ENCODE measurements at regions of chr6 and their contacts with region 1.

Region 1: DNA sequence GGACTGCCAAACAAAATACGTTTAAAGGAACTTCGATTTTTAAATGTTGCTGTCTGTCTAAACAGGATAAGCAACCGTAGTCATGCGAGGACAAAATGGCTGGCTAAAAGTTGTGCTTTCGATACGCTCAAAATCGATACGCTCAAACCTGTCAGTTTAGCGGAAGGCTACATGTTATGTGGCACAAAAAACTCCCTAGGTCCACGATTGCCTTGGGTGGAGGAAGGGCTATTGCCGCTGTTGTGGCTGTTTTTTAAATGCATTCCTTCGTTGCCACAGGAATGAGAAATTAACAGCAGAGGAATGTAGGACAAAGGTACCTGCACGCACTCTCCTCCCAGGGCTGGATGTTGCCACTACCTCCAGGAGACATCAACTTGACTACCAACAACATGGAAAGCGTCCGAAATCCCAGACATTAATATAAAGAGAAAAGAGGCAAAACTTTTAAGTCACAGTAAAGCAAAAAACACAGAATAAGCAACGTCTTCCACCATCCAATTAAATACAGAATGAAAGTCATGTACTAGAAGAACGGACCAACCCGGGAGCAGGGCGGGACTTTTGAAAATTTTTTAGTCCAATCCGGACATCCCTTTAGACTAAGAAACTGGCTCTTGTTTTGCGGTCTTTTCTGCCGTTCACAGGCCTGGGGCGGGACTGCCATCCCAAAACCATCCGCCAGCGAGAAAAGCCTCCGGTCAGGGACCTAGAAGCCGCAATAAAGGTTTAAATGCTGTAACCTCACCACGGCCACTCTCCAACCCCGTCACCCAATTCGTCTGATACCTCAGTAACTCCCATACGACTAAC is 32.2 kb upstream of the HFE start:
- DNase-seq: peak; percentile 68 to 97 (median 80)
- ATAC-seq: peak; percentile 71
- H3K4me3 ChIP-seq: peak overlapping the region; percentile 89
- H3K4me3 Mint-ChIP-seq: peak overlapping the region; percentile 97
- H3K27ac ChIP-seq: peak overlapping the region; percentile 81
- H3K27ac Mint-ChIP-seq: peak overlapping the region; percentile 96
- H3K4me1 ChIP-seq: peaks cover 29% of the 10 kb centered on the region
- H3K4me1 Mint-ChIP-seq: peaks cover 28% of the 10 kb centered on the region
- H3K27me3 ChIP-seq: no peaks in the 10 kb centered on the region
- H3K27me3 Mint-ChIP-seq: no peaks in the 10 kb centered on the region
- CTCF ChIP-seq: no peak

Region 2: DNA sequence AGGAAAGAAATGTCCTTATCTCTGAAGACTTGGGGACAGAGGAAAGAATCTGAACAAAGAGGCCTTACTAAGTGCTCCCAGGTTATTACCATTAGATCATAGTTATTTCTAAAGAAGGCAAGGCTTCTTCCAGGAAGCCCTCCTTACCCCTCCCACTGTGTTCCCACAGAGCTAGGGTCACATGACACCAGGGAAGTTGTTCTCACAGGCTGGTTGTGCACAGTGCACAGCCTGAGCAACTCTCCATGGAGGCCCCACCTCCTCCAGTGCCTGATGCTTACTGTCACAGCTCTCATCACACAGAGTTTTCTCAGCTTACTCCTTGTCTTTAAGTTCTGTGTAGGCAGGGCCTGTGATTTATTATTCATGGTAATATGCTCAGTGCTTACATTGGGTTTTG is 472.0 kb before region 1 on chr6:
- CTCF ChIA-PET with region 1: no interaction called
- POLR2A ChIA-PET with region 1: no interaction called
- intact Hi-C with region 1: no loop called
- DNase-seq: no peak
- ATAC-seq: no peak
- H3K4me3 ChIP-seq: no peak overlapping the region
- H3K4me3 Mint-ChIP-seq: no peak overlapping the region
- H3K27ac ChIP-seq: no peak overlapping the region
- H3K27ac Mint-ChIP-seq: no peak overlapping the region
- H3K4me1 ChIP-seq: peaks cover 5% of the 10 kb centered on the region
- H3K4me1 Mint-ChIP-seq: peaks cover 10% of the 10 kb centered on the region
- H3K27me3 ChIP-seq: no peaks in the 10 kb centered on the region
- H3K27me3 Mint-ChIP-seq: no peaks in the 10 kb centered on the region
- CTCF ChIP-seq: no peak

Region 3: GRCh38 chr6:26020329-26021000 is 34.6 kb before region 1 on chr6:
- CTCF ChIA-PET with region 1: interaction called, 11 read pairs
- POLR2A ChIA-PET with region 1: interaction called, 189 read pairs
- intact Hi-C with region 1: loop called in 1 of 2 experiments (anchors 5 kb)
- DNase-seq: peak; percentile 63 to 96 (median 78)
- ATAC-seq: peak; percentile 50
- H3K4me3 ChIP-seq: peak overlapping the region; percentile 73
- H3K4me3 Mint-ChIP-seq: peak overlapping the region; percentile 95
- H3K27ac ChIP-seq: peak overlapping the region; percentile 95 to 96
- H3K27ac Mint-ChIP-seq: peak overlapping the region; percentile 97
- H3K4me1 ChIP-seq: peaks cover 38% of the 10 kb centered on the region
- H3K4me1 Mint-ChIP-seq: peaks cover 41% of the 10 kb centered on the region
- H3K27me3 ChIP-seq: no peaks in the 10 kb centered on the region
- H3K27me3 Mint-ChIP-seq: no peaks in the 10 kb centered on the region
- CTCF ChIP-seq: no peak

Region 4: DNA sequence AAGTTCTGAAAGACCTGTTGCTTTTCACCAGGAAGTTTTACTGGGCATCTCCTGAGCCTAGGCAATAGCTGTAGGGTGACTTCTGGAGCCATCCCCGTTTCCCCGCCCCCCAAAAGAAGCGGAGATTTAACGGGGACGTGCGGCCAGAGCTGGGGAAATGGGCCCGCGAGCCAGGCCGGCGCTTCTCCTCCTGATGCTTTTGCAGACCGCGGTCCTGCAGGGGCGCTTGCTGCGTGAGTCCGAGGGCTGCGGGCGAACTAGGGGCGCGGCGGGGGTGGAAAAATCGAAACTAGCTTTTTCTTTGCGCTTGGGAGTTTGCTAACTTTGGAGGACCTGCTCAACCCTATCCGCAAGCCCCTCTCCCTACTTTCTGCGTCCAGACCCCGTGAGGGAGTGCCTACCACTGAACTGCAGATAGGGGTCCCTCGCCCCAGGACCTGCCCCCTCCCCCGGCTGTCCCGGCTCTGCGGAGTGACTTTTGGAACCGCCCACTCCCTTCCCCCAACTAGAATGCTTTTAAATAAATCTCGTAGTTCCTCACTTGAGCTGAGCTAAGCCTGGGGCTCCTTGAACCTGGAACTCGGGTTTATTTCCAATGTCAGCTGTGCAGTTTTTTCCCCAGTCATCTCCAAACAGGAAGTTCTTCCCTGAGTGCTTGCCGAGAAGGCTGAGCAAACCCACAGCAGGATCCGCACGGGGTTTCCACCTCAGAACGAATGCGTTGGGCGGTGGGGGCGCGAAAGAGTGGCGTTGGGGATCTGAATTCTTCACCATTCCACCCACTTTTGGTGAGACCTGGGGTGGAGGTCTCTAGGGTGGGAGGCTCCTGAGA is 32.4 kb after region 1 on chr6 and contains the start of gene HFE:
- CTCF ChIA-PET with region 1: no interaction called
- POLR2A ChIA-PET with region 1: interaction called, 41 read pairs
- intact Hi-C with region 1: no loop called
- DNase-seq: peak in 11 of 14 experiments; percentile 3 to 57 (median 21)
- ATAC-seq: peak; percentile 25
- H3K4me3 ChIP-seq: peak within 1 kb of the TSS; percentile 86
- H3K4me3 Mint-ChIP-seq: peak within 1 kb of the TSS; percentile 87
- H3K27ac ChIP-seq: peak within 1 kb of the TSS; percentile 23 to 61
- H3K27ac Mint-ChIP-seq: peak within 1 kb of the TSS; percentile 71
- H3K4me1 ChIP-seq: peaks cover 33% of the 10 kb centered on the region
- H3K4me1 Mint-ChIP-seq: peaks cover 34% of the 10 kb centered on the region
- H3K27me3 ChIP-seq: no peaks in the 10 kb centered on the region
- H3K27me3 Mint-ChIP-seq: no peaks in the 10 kb centered on the region
- CTCF ChIP-seq: no peak
- total RNA-seq, gene HFE: 0.08 to 0.28 TPM

Region 5: DNA sequence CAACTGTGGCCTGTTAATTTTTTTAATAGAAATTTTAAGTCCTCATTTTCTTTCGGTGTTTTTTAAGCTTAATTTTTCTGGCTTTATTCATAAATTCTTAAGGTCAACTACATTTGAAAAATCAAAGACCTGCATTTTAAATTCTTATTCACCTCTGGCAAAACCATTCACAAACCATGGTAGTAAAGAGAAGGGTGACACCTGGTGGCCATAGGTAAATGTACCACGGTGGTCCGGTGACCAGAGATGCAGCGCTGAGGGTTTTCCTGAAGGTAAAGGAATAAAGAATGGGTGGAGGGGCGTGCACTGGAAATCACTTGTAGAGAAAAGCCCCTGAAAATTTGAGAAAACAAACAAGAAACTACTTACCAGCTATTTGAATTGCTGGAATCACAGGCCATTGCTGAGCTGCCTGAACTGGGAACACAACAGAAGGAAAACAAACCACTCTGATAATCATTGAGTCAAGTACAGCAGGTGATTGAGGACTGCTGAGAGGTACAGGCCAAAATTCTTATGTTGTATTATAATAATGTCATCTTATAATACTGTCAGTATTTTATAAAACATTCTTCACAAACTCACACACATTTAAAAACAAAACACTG is 42.3 kb after region 1 on chr6:
- CTCF ChIA-PET with region 1: interaction called, 3 read pairs
- POLR2A ChIA-PET with region 1: interaction called, 138 read pairs
- intact Hi-C with region 1: loop called in 1 of 2 experiments (anchors 2 kb)
- DNase-seq: peak; percentile 50 to 87 (median 57)
- ATAC-seq: peak; percentile 86
- H3K4me3 ChIP-seq: no peak overlapping the region
- H3K4me3 Mint-ChIP-seq: no peak overlapping the region
- H3K27ac ChIP-seq: no peak overlapping the region
- H3K27ac Mint-ChIP-seq: no peak overlapping the region
- H3K4me1 ChIP-seq: no peaks in the 10 kb centered on the region
- H3K4me1 Mint-ChIP-seq: peaks cover 5% of the 10 kb centered on the region
- H3K27me3 ChIP-seq: no peaks in the 10 kb centered on the region
- H3K27me3 Mint-ChIP-seq: peaks cover 4% of the 10 kb centered on the region
- CTCF ChIP-seq: peak; percentile 78

Region 6: DNA sequence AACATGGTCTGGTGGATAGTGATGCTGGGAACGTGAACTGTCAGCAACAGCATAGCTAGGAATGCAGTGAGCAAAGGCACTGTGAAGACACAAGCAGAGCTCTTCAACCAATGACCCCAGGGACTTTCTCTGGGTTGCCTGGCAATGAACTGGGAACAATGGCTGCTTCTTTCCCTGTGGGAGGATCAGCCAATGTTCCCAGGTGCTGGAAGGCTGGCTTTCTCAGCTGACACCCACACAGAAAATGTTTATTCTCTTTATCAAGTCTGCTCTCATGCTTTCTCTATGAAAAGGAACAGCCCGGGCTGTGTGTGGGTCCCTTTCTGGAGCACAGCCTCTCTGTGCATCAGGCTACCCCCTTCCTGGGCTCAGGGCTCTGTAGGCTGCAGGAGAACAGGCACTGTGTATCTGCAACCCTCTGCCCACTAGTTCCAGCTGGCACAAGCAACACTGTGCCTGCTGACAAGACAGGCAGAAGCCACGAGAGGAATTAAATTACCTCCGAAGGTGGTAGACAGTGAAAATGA is 86.4 kb after region 1 on chr6:
- CTCF ChIA-PET with region 1: no interaction called
- POLR2A ChIA-PET with region 1: no interaction called
- intact Hi-C with region 1: no loop called
- DNase-seq: no peak
- ATAC-seq: no peak
- H3K4me3 ChIP-seq: no peak overlapping the region
- H3K4me3 Mint-ChIP-seq: no peak overlapping the region
- H3K27ac ChIP-seq: no peak overlapping the region
- H3K27ac Mint-ChIP-seq: no peak overlapping the region
- H3K4me1 ChIP-seq: no peaks in the 10 kb centered on the region
- H3K4me1 Mint-ChIP-seq: peaks cover 5% of the 10 kb centered on the region
- H3K27me3 ChIP-seq: no peaks in the 10 kb centered on the region
- H3K27me3 Mint-ChIP-seq: no peaks in the 10 kb centered on the region
- CTCF ChIP-seq: no peak

Region 7: GRCh38 chr6:26204332-26205165 is 149.5 kb after region 1 on chr6:
- CTCF ChIA-PET with region 1: no interaction called
- POLR2A ChIA-PET with region 1: interaction called, 103 read pairs
- intact Hi-C with region 1: loop called in 1 of 2 experiments (anchors 5 kb)
- DNase-seq: peak; percentile 73 to 98 (median 80)
- ATAC-seq: peak; percentile 69
- H3K4me3 ChIP-seq: peak overlapping the region; percentile 68
- H3K4me3 Mint-ChIP-seq: no peak overlapping the region
- H3K27ac ChIP-seq: peak overlapping the region; percentile 89 to 90
- H3K27ac Mint-ChIP-seq: no peak overlapping the region
- H3K4me1 ChIP-seq: peaks cover 34% of the 10 kb centered on the region
- H3K4me1 Mint-ChIP-seq: peaks cover 8% of the 10 kb centered on the region
- H3K27me3 ChIP-seq: no peaks in the 10 kb centered on the region
- H3K27me3 Mint-ChIP-seq: no peaks in the 10 kb centered on the region
- CTCF ChIP-seq: peak; percentile 32

Region 8: GRCh38 chr6:26249957-26250697 is 195.1 kb after region 1 on chr6:
- CTCF ChIA-PET with region 1: no interaction called
- POLR2A ChIA-PET with region 1: interaction called, 12 read pairs
- intact Hi-C with region 1: no loop called
- DNase-seq: peak; percentile 64 to 93 (median 74)
- ATAC-seq: peak; percentile 78
- H3K4me3 ChIP-seq: peak overlapping the region; percentile 75
- H3K4me3 Mint-ChIP-seq: peak overlapping the region; percentile 97
- H3K27ac ChIP-seq: peak overlapping the region; percentile 72 to 80
- H3K27ac Mint-ChIP-seq: peak overlapping the region; percentile 88
- H3K4me1 ChIP-seq: peaks cover 29% of the 10 kb centered on the region
- H3K4me1 Mint-ChIP-seq: peaks cover 44% of the 10 kb centered on the region
- H3K27me3 ChIP-seq: no peaks in the 10 kb centered on the region
- H3K27me3 Mint-ChIP-seq: no peaks in the 10 kb centered on the region
- CTCF ChIP-seq: no peak

Region 9: DNA sequence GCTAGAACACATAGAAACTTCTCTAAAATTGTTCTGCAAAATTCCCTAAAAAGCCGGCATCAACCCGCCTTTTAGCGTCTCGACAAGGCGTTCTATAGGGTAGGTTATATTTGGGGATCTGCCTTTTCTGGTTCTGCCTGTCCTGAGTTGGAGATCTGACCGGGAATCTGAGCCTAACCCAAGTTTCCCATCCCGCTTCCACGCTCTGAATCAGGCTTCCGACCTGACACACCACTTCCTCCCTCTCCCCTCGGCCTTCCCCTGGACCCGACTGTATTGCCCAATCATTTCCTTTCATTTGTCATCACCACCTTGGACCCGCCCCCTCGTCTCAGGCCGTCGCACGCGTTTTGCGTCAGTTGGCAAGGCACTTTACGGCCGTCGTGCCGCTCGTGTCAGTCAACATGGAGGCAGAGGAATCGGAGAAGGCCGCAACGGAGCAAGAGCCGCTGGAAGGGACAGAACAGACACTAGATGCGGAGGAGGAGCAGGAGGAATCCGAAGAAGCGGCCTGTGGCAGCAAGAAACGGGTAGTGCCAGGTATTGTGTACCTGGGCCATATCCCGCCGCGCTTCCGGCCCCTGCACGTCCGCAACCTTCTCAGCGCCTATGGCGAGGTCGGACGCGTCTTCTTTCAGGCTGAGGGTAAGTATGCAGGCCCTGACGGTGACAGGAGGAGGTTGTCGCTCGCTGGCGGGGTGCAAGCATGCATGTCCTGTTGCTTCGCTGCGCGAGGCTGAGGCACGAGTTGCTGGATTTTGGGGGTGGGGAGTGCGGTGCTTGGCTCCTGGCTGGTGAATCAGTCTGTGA is 541.7 kb after region 1 on chr6 and contains the start of gene ABT1:
- CTCF ChIA-PET with region 1: no interaction called
- POLR2A ChIA-PET with region 1: no interaction called
- intact Hi-C with region 1: loop called in 1 of 2 experiments (anchors 10 kb)
- DNase-seq: peak; percentile 92 to 98 (median 96)
- ATAC-seq: peak; percentile 79
- H3K4me3 ChIP-seq: peak within 1 kb of the TSS; percentile 98
- H3K4me3 Mint-ChIP-seq: no peak within 1 kb of the TSS
- H3K27ac ChIP-seq: peak within 1 kb of the TSS; percentile 86 to 95
- H3K27ac Mint-ChIP-seq: no peak within 1 kb of the TSS
- H3K4me1 ChIP-seq: peaks cover 31% of the 10 kb centered on the region
- H3K4me1 Mint-ChIP-seq: peaks cover 23% of the 10 kb centered on the region
- H3K27me3 ChIP-seq: peaks cover 8 to 28% of the 10 kb centered on the region in 2 experiments
- H3K27me3 Mint-ChIP-seq: peaks cover 30% of the 10 kb centered on the region
- CTCF ChIP-seq: no peak
- total RNA-seq, gene ABT1: 39.8 to 40.4 TPM

Region 10: GRCh38 chr6:26739811-26740210 is 684.7 kb after region 1 on chr6:
- CTCF ChIA-PET with region 1: no interaction called
- POLR2A ChIA-PET with region 1: no interaction called
- intact Hi-C with region 1: no loop called
- DNase-seq: no peak
- ATAC-seq: no peak
- H3K4me3 ChIP-seq: no peak overlapping the region
- H3K4me3 Mint-ChIP-seq: no peak overlapping the region
- H3K27ac ChIP-seq: no peak overlapping the region
- H3K27ac Mint-ChIP-seq: no peak overlapping the region
- H3K4me1 ChIP-seq: no peaks in the 10 kb centered on the region
- H3K4me1 Mint-ChIP-seq: no peaks in the 10 kb centered on the region
- H3K27me3 ChIP-seq: peaks cover 20 to 27% of the 10 kb centered on the region in 2 experiments
- H3K27me3 Mint-ChIP-seq: peaks cover 43% of the 10 kb centered on the region
- CTCF ChIP-seq: no peak